ENCODE measurements at regions of chr16 and their contacts with region 1.

Region 1: GRCh38 chr16:29862884-29863668 is at the start of gene CDIPT:
- DNase-seq: peak; percentile 88 to 98
- ATAC-seq: peak; percentile 97 to 99 (median 97)
- H3K4me3 ChIP-seq: peak within 1 kb of the TSS; percentile 72
- H3K4me3 Mint-ChIP-seq: peak within 1 kb of the TSS; percentile 91
- H3K27ac ChIP-seq: peak within 1 kb of the TSS; percentile 88
- H3K27ac Mint-ChIP-seq: peak within 1 kb of the TSS; percentile 95 to 99
- H3K4me1 ChIP-seq: peaks cover 26% of the 10 kb centered on the region
- H3K4me1 Mint-ChIP-seq: peaks cover 18 to 29% of the 10 kb centered on the region in 2 donors
- H3K27me3 ChIP-seq: no peaks in the 10 kb centered on the region
- H3K27me3 Mint-ChIP-seq: peaks cover 0 to 4% of the 10 kb centered on the region in 2 donors
- CTCF ChIP-seq: peak; percentile 51
- total RNA-seq, gene CDIPT: 42.3 to 66.9 (median 53.0) TPM

Region 2: GRCh38 chr16:29815793-29816693 is 47.0 kb before region 1 on chr16 and contains the start of gene PAGR1:
- intact Hi-C with region 1: loop called (anchors 5 kb)
- DNase-seq: peak; percentile 96 to 100
- ATAC-seq: peak; percentile 76 to 91 (median 78)
- H3K4me3 ChIP-seq: peak within 1 kb of the TSS; percentile 79
- H3K4me3 Mint-ChIP-seq: peak within 1 kb of the TSS; percentile 99
- H3K27ac ChIP-seq: peak within 1 kb of the TSS; percentile 88
- H3K27ac Mint-ChIP-seq: peak within 1 kb of the TSS; percentile 94 to 98
- H3K4me1 ChIP-seq: peaks cover 63% of the 10 kb centered on the region
- H3K4me1 Mint-ChIP-seq: peaks cover 59 to 81% of the 10 kb centered on the region in 2 donors
- H3K27me3 ChIP-seq: no peaks in the 10 kb centered on the region
- H3K27me3 Mint-ChIP-seq: peaks cover 0 to 2% of the 10 kb centered on the region in 2 donors
- CTCF ChIP-seq: peak; percentile 97
- total RNA-seq, gene PAGR1: 8.9 to 16.2 (median 13.4) TPM

Region 3: DNA sequence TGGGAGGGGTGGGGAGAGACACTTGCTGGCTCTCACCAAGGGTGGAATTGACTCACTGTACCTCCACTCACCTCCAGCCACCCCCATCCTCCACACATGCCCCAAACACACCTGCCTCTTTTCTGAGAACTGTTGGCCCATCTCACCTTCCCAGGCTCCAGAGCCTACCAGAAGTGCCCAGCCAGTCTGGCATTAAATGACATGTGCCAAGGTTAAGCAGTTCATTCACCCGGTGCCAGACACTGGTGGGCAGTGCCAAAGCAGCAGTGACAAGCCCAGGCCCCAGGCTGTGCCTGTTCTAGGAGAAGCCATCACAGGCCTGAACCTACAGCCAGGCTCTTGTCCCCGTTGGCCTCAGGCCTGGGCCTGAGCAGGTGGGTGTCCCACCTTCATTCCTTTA is 31.6 kb before region 1 on chr16:
- intact Hi-C with region 1: no loop called
- DNase-seq: no peak
- ATAC-seq: no peak
- H3K4me3 ChIP-seq: no peak overlapping the region
- H3K4me3 Mint-ChIP-seq: no peak overlapping the region
- H3K27ac ChIP-seq: no peak overlapping the region
- H3K27ac Mint-ChIP-seq: no peak overlapping the region
- H3K4me1 ChIP-seq: peaks cover 11% of the 10 kb centered on the region
- H3K4me1 Mint-ChIP-seq: peaks cover 6 to 17% of the 10 kb centered on the region in 2 donors
- H3K27me3 ChIP-seq: no peaks in the 10 kb centered on the region
- H3K27me3 Mint-ChIP-seq: no peaks in the 10 kb centered on the region
- CTCF ChIP-seq: no peak

Region 4: DNA sequence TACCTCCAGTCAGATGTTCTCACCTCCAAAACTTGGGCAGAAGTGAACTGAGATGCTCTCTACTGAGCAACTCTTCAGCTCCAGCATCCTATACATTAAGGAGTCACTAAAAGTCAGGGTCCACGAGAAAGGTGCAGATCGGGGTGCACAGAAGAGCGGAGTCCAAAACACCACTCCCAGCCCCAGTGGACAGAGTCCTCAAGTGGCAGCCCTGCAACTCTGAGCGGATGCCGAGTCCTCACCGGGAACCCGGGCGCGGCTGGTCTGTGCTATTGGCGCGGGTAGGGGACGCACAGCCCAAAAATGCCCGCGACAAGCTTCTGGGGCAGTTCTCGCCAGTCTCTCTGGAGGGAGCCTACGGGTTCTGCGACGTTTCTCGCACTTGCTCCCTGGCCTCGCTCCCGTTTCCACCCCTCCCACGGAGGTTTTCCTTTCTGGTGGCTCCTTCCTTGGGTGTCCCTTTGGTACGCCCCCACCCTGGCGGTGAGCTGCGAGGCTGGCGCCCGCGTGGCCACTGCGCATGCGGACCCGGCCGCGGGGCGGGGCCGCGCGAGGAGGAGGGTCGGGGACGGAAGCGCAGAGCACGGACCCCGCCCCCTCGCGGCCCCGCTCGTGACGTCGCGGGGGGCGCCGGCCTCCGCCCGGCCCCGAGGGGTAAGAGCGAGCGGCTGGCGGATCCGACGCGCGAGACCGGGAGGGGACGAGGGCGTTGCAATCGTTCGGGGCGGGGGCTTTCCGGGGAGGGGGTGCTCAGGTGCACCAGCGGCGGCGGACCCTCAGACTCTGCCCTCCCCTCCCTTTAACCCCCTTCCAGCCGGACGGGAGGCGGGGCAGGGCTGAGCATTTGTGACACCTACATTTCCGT is 98.6 kb after region 1 on chr16 and contains the start of gene TMEM219:
- intact Hi-C with region 1: loop called (anchors 2 kb)
- DNase-seq: peak; percentile 96 to 97
- ATAC-seq: peak; percentile 89 to 97 (median 90)
- H3K4me3 ChIP-seq: peak within 1 kb of the TSS; percentile 75
- H3K4me3 Mint-ChIP-seq: peak within 1 kb of the TSS; percentile 93
- H3K27ac ChIP-seq: peak within 1 kb of the TSS; percentile 78
- H3K27ac Mint-ChIP-seq: peak within 1 kb of the TSS; percentile 88 to 90
- H3K4me1 ChIP-seq: peaks cover 17% of the 10 kb centered on the region
- H3K4me1 Mint-ChIP-seq: peaks cover 11 to 17% of the 10 kb centered on the region in 2 donors
- H3K27me3 ChIP-seq: no peaks in the 10 kb centered on the region
- H3K27me3 Mint-ChIP-seq: no peaks in the 10 kb centered on the region
- CTCF ChIP-seq: peak; percentile 23
- total RNA-seq, gene TMEM219: 50.2 to 69.5 (median 50.8) TPM

Region 5: GRCh38 chr16:29995911-29996772 is 133.1 kb after region 1 on chr16 and contains the start of gene INO80E:
- intact Hi-C with region 1: loop called (anchors 1 kb)
- DNase-seq: peak; percentile 98
- ATAC-seq: peak; percentile 98 to 100 (median 99)
- H3K4me3 ChIP-seq: peak within 1 kb of the TSS; percentile 96
- H3K4me3 Mint-ChIP-seq: peak within 1 kb of the TSS; percentile 99
- H3K27ac ChIP-seq: peak within 1 kb of the TSS; percentile 98
- H3K27ac Mint-ChIP-seq: peak within 1 kb of the TSS; percentile 97 to 98
- H3K4me1 ChIP-seq: peaks cover 20% of the 10 kb centered on the region
- H3K4me1 Mint-ChIP-seq: peaks cover 13 to 40% of the 10 kb centered on the region in 2 donors
- H3K27me3 ChIP-seq: no peaks in the 10 kb centered on the region
- H3K27me3 Mint-ChIP-seq: no peaks in the 10 kb centered on the region
- CTCF ChIP-seq: no peak
- total RNA-seq, gene INO80E: 75.0 to 107 (median 99.5) TPM

Measured in natural killer cell (primary cell).